ENCODE measurements at regions of chr2 and their contacts with region 1.

Region 1: GRCh38 chr2:183059561-183059960 is 19.0 kb upstream of the DUSP19 start:
- DNase-seq: peak; percentile 88
- ATAC-seq: peak; percentile 95
- H3K4me3 ChIP-seq: no peak overlapping the region
- H3K27ac ChIP-seq: peak overlapping the region; percentile 48
- H3K4me1 ChIP-seq: peaks cover 12% of the 10 kb centered on the region
- H3K27me3 ChIP-seq: no peaks in the 10 kb centered on the region
- CTCF ChIP-seq: no peak

Region 2: GRCh38 chr2:183000846-183001245 is 58.7 kb before region 1 on chr2:
- CTCF ChIA-PET with region 1: interaction called, 12 read pairs
- POLR2A ChIA-PET with region 1: no interaction called
- intact Hi-C with region 1: no loop called
- DNase-seq: no peak
- ATAC-seq: no peak
- H3K4me3 ChIP-seq: no peak overlapping the region
- H3K27ac ChIP-seq: no peak overlapping the region
- H3K4me1 ChIP-seq: no peaks in the 10 kb centered on the region
- H3K27me3 ChIP-seq: no peaks in the 10 kb centered on the region
- CTCF ChIP-seq: no peak

Region 3: DNA sequence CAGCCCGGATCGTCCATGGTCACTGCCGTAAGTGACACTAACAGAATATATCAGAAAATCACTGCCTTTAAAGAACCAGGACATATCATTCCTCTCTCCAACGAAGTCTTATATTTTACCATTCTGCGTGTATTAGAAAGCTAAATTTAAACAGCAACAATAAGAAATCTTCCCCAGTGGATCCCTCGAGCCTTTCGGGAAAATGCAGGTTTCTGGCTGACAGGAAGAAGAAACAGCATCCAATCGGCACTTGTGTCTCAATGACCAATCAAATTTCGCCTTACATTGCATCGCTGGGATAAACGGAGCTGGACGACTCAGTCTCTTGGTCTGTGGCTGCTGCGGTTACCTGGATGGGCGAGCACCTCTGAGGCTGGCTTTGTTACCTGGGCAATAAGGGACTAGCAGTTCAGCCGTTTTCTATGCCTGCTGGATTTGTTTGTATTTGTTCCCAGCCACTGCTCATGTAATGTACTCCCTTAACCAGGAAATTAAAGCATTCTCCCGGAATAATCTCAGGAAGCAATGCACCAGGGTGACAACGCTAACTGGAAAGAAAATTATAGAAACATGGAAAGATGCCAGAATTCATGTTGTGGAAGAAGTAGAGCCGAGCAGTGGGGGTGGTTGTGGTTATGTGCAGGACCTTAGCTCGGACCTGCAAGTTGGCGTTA is 19.0 kb after region 1 on chr2 and contains the start of gene DUSP19:
- CTCF ChIA-PET with region 1: no interaction called
- POLR2A ChIA-PET with region 1: interaction called, 11 read pairs
- intact Hi-C with region 1: loop called (anchors 1 kb)
- DNase-seq: peak; percentile 99
- ATAC-seq: peak; percentile 94
- H3K4me3 ChIP-seq: peak within 1 kb of the TSS; percentile 80
- H3K27ac ChIP-seq: 0 out of 2 replicates have a peak within 1 kb of the TSS, but pooled peaks have one; percentile 12
- H3K4me1 ChIP-seq: peaks cover 13% of the 10 kb centered on the region
- H3K27me3 ChIP-seq: no peaks in the 10 kb centered on the region
- CTCF ChIP-seq: no peak
- total RNA-seq, gene DUSP19: 0.51 and 0.58 TPM in 2 replicates